ENCODE measurements at regions of chr1 and their contacts with region 1.

Region 1: GRCh38 chr1:160219062-160219929 is 14.1 kb downstream of the PEA15 start:
- DNase-seq: peak; percentile 51
- H3K4me3 ChIP-seq: no peak overlapping the region
- CTCF ChIP-seq: peak; percentile 52

Region 2: GRCh38 chr1:160108888-160109662 is 110.2 kb before region 1 on chr1:
- in situ Hi-C with region 1: loop called (anchors 5 kb)
- DNase-seq: peak; percentile 31
- H3K4me3 ChIP-seq: no peak overlapping the region
- CTCF ChIP-seq: peak; percentile 72

Region 3: GRCh38 chr1:160144921-160145320 is 74.4 kb before region 1 on chr1:
- in situ Hi-C with region 1: loop called (anchors 5 kb)
- DNase-seq: peak; percentile 49
- H3K4me3 ChIP-seq: no peak overlapping the region
- CTCF ChIP-seq: no peak

Region 4: DNA sequence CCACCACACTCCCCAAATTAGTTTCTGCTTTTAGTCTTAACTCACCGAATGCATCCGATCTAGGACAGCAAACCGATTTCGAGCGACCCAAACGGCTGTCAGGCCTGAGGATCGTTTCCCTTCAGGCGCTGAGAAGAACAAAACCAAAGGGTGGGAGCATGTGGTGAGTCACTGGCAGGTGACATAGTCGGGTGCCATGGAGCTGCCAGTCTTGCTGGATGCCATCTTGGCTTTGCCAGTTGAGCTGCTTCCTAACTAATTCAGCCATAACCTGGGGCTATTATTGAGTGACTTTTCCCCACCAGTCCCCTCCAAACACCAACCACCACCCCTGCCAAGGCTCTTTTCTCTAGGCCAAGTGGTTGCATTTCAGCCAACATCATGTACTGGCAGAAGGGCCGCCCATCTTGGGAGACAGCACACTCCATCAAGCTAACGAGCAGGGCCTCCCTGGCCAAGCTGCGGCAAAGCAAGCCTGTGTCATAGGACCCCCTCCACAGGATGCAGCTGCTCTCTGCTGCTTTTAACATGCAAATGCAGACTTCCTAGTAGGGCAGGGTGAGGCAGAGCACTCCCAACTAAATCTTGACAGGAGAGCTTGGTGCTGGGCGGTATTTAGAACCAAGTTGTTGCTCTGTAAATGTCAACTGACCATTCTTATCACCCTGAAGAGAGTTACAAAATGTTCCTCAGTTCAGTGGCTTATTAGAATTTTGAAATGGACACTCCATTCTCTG is 88.0 kb after region 1 on chr1:
- in situ Hi-C with region 1: no loop called
- DNase-seq: no peak
- H3K4me3 ChIP-seq: no peak overlapping the region
- CTCF ChIP-seq: no peak

Region 5: DNA sequence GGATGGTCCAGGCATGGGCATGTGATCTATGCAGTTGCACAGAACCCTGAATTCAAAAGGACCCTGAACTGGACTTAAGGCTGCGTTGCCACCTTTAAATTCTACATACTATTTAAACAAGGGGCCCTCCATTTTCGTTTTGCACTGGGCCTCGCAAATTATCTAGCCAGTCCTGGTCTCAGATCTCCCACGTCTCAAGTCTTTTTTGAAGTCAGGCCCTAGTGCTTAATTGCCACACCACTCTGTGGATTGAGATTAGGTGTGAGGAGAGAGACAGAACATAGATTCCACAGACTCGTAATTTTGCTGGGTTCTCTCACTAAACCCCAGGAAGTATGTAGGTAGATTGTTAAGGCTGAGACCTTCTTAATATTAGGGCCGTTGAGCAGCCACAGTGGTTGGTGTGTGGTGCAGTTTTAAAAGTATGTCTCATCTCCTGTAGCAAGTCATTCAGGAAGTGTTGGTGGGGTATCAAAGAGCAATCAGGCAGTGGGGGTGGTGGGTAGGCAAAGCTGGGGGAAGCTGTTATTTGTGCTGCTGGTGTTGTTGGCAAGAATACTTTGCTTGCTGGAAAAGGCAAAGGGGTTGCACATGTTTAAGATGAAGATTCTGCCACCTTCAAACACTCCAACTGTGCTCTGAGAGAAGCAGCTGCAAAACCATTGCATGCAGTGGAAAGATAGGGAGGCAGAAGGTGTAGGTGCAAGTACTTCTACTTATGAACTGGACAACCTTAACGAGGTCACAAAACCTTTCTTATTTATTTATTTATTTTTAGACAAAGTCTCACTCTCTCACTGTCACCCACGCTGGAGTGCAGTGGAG is 348.8 kb after region 1 on chr1:
- in situ Hi-C with region 1: no loop called
- DNase-seq: no peak
- H3K4me3 ChIP-seq: no peak overlapping the region
- CTCF ChIP-seq: no peak